ENCODE measurements at regions of chr3 and their contacts with region 1.

Region 1: DNA sequence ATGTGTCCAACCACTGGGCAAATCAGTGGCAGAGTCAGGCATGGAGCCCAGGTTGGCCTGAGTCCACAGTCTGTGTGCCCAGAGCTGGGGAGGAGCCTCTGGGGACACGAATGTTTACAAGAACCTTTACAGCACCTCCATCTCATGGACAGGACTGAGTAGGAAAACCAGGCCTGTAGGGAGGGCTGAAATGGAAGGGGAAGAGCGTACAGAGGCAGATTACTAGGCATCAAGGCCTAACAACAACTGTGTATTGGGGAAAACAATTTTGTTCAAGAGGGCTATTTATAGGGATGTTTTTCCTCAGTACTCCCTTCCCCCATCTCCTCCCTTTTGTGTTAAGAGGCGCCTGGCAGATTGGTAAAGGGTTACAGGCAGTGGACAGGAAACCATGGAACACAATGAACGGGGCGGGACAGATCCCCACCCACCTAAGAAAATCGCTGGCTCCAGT is 15.1 kb upstream of the ARHGAP31 start:
- DNase-seq: no peak
- ATAC-seq: no peak
- H3K4me3 ChIP-seq: no peak overlapping the region
- H3K4me3 Mint-ChIP-seq: no peak overlapping the region
- H3K27ac ChIP-seq: no peak overlapping the region
- H3K27ac Mint-ChIP-seq: no peak overlapping the region
- H3K4me1 ChIP-seq: peaks cover 0 to 7% of the 10 kb centered on the region in 2 donors
- H3K4me1 Mint-ChIP-seq: peaks cover 0 to 23% (median 11%) of the 10 kb centered on the region in 7 donors
- H3K27me3 ChIP-seq: no peaks in the 10 kb centered on the region
- H3K27me3 Mint-ChIP-seq: no peaks in the 10 kb centered on the region

Region 2: DNA sequence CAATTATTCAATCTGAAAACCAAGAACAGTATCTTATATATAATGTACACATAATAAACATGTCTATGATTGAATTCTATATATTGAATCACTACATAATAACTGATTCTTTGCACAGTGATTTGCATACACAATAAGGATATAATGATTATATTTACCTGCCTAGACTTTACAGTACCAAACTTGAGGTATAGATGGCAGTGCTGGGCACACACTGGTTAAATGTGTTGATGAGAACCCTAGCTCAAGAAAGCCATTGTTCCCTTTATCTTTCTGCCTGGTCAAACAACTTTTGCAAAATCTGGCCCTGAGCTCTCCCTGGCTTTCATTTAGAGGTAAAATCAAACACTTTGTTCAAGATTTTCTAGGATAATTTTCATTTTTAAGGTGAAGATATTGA is 1871.8 kb before region 1 on chr3:
- CTCF ChIA-PET with region 1: no interaction called
- POLR2A ChIA-PET with region 1: no interaction called
- intact Hi-C with region 1: no loop called
- DNase-seq: no peak
- ATAC-seq: no peak
- H3K4me3 ChIP-seq: no peak overlapping the region
- H3K4me3 Mint-ChIP-seq: no peak overlapping the region
- H3K27ac ChIP-seq: no peak overlapping the region
- H3K27ac Mint-ChIP-seq: no peak overlapping the region
- H3K4me1 ChIP-seq: no peaks in the 10 kb centered on the region
- H3K4me1 Mint-ChIP-seq: no peaks in the 10 kb centered on the region
- H3K27me3 ChIP-seq: no peaks in the 10 kb centered on the region
- H3K27me3 Mint-ChIP-seq: no peaks in the 10 kb centered on the region

Region 3: DNA sequence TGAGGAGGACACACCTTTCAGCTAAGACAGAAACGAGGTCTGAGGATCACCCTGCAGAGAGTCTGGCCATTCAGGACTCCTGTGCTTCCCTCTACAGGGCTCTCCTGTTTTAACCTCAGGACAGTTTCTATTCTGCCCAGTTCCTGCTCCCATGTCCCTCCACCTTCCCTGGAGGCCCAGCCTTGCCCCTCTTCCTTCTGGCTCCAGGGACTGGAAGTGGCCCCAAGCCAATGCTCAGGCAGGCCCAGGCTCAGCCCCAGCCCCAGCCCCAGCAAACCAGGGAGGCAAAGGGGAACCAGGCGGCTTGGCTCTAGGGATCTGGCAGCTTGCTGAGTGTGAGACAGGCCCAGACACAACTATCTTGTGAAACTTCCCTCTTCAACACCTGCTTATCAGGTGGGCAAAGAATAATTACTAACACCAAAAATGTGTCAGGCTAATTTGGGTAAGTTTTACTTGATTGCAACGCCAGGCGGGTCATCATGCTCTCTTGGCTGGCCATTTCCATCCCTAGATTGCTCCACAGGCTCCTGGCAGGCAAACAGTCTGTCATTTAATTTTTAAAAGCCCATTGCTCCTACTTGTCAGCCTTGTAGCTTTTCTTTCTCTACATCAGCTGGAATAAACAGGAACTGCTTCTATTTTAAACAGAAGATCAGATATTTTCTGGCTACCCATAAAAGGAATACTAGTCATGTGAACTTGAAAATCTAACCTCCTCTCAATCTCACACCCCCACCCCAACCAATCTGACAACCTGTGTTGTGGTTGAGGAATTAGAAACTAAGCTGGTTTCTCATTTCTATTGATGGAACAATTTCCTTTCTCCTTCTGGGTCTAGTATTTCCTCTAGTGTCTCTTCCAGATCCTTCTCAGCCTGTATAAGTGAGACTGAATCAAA is 72.3 kb before region 1 on chr3:
- CTCF ChIA-PET with region 1: no interaction called
- POLR2A ChIA-PET with region 1: no interaction called
- intact Hi-C with region 1: no loop called
- DNase-seq: peak in 7 of 9 donors; percentile 38 to 62 (median 54)
- ATAC-seq: peak; percentile 64
- H3K4me3 ChIP-seq: peak overlapping the region; percentile 40
- H3K4me3 Mint-ChIP-seq: peak overlapping the region; percentile 45 to 88 (median 74)
- H3K27ac ChIP-seq: peak overlapping the region; percentile 66
- H3K27ac Mint-ChIP-seq: peak overlapping the region; percentile 15 to 96 (median 93)
- H3K4me1 ChIP-seq: peaks cover 0 to 57% of the 10 kb centered on the region in 2 donors
- H3K4me1 Mint-ChIP-seq: peaks cover 34 to 89% (median 79%) of the 10 kb centered on the region in 7 donors
- H3K27me3 ChIP-seq: no peaks in the 10 kb centered on the region
- H3K27me3 Mint-ChIP-seq: no peaks in the 10 kb centered on the region

Region 4: GRCh38 chr3:119293871-119294695 is 15.0 kb after region 1 on chr3 and contains the start of gene ARHGAP31:
- CTCF ChIA-PET with region 1: interaction called, 11 read pairs
- POLR2A ChIA-PET with region 1: interaction called, 5 read pairs
- intact Hi-C with region 1: loop called in 1 of 2 experiments (anchors 1 kb)
- DNase-seq: peak; percentile 70 to 91 (median 86)
- ATAC-seq: peak; percentile 77
- H3K4me3 ChIP-seq: peak within 1 kb of the TSS; percentile 50
- H3K4me3 Mint-ChIP-seq: peak within 1 kb of the TSS; percentile 68 to 95 (median 90)
- H3K27ac ChIP-seq: peak within 1 kb of the TSS; percentile 91
- H3K27ac Mint-ChIP-seq: peak within 1 kb of the TSS; percentile 71 to 99 (median 92)
- H3K4me1 ChIP-seq: peaks cover 22 to 26% of the 10 kb centered on the region in 2 donors
- H3K4me1 Mint-ChIP-seq: peaks cover 26 to 74% (median 63%) of the 10 kb centered on the region in 7 donors
- H3K27me3 ChIP-seq: no peaks in the 10 kb centered on the region
- H3K27me3 Mint-ChIP-seq: peaks cover 0 to 43% (median 0%) of the 10 kb centered on the region in 5 donors
- total RNA-seq, gene ARHGAP31: 3.0 to 11.9 (median 3.1) TPM

Region 5: DNA sequence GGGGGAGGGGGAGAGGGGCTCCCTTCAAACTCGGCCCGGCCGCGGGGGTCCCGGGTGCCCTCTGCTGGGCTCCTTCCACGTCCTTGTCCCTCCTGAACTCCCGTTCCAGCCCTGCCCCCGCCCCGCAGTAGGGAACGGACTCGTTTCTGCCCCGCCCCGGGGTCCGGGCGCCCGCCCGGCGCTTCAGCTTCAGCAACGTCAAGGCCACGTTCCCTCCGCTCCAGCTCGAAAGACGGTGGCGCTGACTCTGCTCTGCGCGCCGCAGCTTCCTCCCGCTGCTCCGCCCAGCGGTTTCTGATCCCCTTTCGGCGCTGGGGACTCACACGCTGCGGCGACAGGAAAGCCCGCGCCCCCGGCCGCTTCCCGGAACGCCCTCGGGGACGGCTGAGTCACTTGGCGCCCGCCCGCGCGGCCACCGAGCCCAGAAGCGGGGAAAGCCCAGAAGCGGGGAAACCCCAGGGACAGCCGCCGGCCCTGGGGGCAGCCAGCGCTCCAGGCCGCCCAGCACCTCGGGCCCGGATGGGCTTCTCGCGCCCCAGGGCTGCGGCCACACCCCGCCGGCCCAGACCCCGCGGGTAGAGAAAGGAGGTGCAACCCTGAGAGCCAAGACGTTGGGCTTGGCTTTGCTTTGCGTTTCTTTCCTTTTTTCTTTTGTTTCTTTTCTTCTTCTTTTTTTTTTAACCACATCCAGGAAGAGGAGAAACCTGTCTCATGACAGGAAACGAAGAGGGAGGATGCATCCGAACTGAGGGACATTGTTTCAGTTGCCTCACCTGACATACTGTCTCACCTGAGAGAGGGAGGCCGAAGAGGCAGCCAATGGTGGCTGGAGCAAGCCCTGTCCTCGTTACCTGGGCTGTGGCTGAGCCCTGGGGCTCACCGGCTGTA is 44.0 kb after region 1 on chr3:
- CTCF ChIA-PET with region 1: interaction called, 3 read pairs
- POLR2A ChIA-PET with region 1: no interaction called
- intact Hi-C with region 1: loop called in 1 of 2 experiments (anchors 1 kb)
- DNase-seq: peak; percentile 77 to 96 (median 81)
- ATAC-seq: peak; percentile 90
- H3K4me3 ChIP-seq: peak overlapping the region; percentile 65
- H3K4me3 Mint-ChIP-seq: peak overlapping the region; percentile 84 to 96 (median 90)
- H3K27ac ChIP-seq: peak overlapping the region; percentile 81
- H3K27ac Mint-ChIP-seq: peak overlapping the region; percentile 90 to 99 (median 95)
- H3K4me1 ChIP-seq: peaks cover 10 to 14% of the 10 kb centered on the region in 2 donors
- H3K4me1 Mint-ChIP-seq: peaks cover 12 to 30% (median 21%) of the 10 kb centered on the region in 7 donors
- H3K27me3 ChIP-seq: no peaks in the 10 kb centered on the region
- H3K27me3 Mint-ChIP-seq: peaks cover 0 to 57% (median 0%) of the 10 kb centered on the region in 5 donors

Region 6: GRCh38 chr3:119388577-119388976 is 109.4 kb after region 1 on chr3:
- CTCF ChIA-PET with region 1: no interaction called
- POLR2A ChIA-PET with region 1: no interaction called
- intact Hi-C with region 1: loop called in 1 of 2 experiments (anchors 1 kb)
- DNase-seq: no peak
- ATAC-seq: no peak
- H3K4me3 ChIP-seq: no peak overlapping the region
- H3K4me3 Mint-ChIP-seq: no peak overlapping the region
- H3K27ac ChIP-seq: no peak overlapping the region
- H3K27ac Mint-ChIP-seq: no peak overlapping the region
- H3K4me1 ChIP-seq: no peaks in the 10 kb centered on the region
- H3K4me1 Mint-ChIP-seq: peaks cover 0 to 6% (median 0%) of the 10 kb centered on the region in 7 donors
- H3K27me3 ChIP-seq: no peaks in the 10 kb centered on the region
- H3K27me3 Mint-ChIP-seq: no peaks in the 10 kb centered on the region

Region 7: DNA sequence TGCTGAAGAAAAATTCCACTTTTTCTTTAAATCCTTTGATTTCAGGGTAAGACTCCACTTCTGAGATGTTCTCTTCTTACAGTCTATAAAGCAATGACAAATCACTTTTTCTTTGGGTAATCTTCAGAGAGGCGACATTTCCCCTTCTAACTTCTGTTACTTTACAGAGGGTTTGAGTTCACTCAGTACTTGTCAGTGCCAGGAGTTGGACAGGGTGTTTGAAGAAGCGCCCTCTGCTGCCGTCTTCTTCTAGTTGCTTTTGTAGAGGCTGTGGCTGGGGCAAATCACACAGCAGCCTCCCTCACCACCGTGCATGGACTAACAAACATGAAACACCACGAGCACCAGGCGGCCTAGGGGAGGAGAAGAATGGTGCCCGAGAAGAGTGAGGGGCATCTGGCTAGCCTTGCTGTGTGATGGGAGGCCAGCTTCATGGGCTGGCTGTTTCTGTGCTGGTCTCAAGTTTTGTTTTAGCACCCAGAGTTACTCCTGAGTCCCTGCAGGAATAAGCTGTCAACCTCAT is 280.4 kb after region 1 on chr3 and contains the start of gene CD80:
- CTCF ChIA-PET with region 1: no interaction called
- POLR2A ChIA-PET with region 1: no interaction called
- intact Hi-C with region 1: loop called in 1 of 2 experiments (anchors 1 kb)
- DNase-seq: peak in 7 of 9 donors; percentile 14 to 63 (median 33)
- ATAC-seq: peak; percentile 76
- H3K4me3 ChIP-seq: no peak within 1 kb of the TSS
- H3K4me3 Mint-ChIP-seq: peak within 1 kb of the TSS in 2 of 10 donors; percentile 12 to 81
- H3K27ac ChIP-seq: no peak within 1 kb of the TSS
- H3K27ac Mint-ChIP-seq: peak within 1 kb of the TSS in 2 of 9 donors; percentile 68 to 71
- H3K4me1 ChIP-seq: peaks cover 0 to 6% of the 10 kb centered on the region in 2 donors
- H3K4me1 Mint-ChIP-seq: peaks cover 0 to 64% (median 8%) of the 10 kb centered on the region in 7 donors
- H3K27me3 ChIP-seq: no peaks in the 10 kb centered on the region
- H3K27me3 Mint-ChIP-seq: peaks cover 0 to 5% (median 0%) of the 10 kb centered on the region in 5 donors
- total RNA-seq, gene CD80: 0.13 to 15.1 (median 1.2) TPM in 3 of 5 experiments, not detected in the others

Region 8: DNA sequence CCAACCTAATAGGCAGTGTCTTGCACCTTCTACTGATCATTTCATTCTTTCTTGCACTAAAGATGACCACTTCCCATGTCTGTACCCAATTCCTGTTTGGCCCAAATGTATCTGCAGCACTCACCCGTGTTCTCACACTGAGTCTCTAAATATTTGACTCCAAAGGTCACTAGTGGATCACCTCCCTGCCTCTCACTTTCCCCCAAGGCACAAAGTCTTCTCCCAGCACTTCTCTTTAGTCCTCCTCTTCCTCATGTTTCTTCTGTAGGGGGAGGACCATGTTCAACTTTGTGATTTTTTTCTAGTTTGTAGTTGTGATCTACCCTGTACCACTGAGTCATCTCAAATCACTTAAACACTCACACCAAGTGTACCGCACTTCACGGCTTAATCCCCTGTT is 516.7 kb after region 1 on chr3:
- CTCF ChIA-PET with region 1: no interaction called
- POLR2A ChIA-PET with region 1: no interaction called
- intact Hi-C with region 1: no loop called
- DNase-seq: no peak
- ATAC-seq: no peak
- H3K4me3 ChIP-seq: no peak overlapping the region
- H3K4me3 Mint-ChIP-seq: no peak overlapping the region
- H3K27ac ChIP-seq: no peak overlapping the region
- H3K27ac Mint-ChIP-seq: peak overlapping the region in 1 of 9 donors; percentile 18
- H3K4me1 ChIP-seq: no peaks in the 10 kb centered on the region
- H3K4me1 Mint-ChIP-seq: peaks cover 0 to 1% (median 0%) of the 10 kb centered on the region in 7 donors
- H3K27me3 ChIP-seq: no peaks in the 10 kb centered on the region
- H3K27me3 Mint-ChIP-seq: peaks cover 5 to 26% (median 13%) of the 10 kb centered on the region in 5 donors